BJ (cell line): ENCODE measurements at regions of chr20 and their contacts with region 1.

Region 1: GRCh38 chr20:51001758-51002157 is 21.1 kb downstream of the KCNG1 start:
- DNase-seq: no peak
- H3K4me3 ChIP-seq: no peak overlapping the region
- H3K27me3 ChIP-seq: no peaks in the 10 kb centered on the region; the same call in 1 of the 2 replicates
- CTCF ChIP-seq: no peak

Region 2: GRCh38 chr20:50987592-50988210 is 14.1 kb before region 1 on chr20:
- CTCF ChIA-PET with region 1: interaction called, 19 read pairs
- POLR2A ChIA-PET with region 1: no interaction called
- DNase-seq: peak; percentile 44
- H3K4me3 ChIP-seq: no peak overlapping the region
- H3K27me3 ChIP-seq: no peaks in the 10 kb centered on the region
- CTCF ChIP-seq: peak; percentile 80

Region 3: GRCh38 chr20:51014797-51015722 is 13.3 kb after region 1 on chr20:
- CTCF ChIA-PET with region 1: interaction called, 14 read pairs
- POLR2A ChIA-PET with region 1: no interaction called
- DNase-seq: no peak
- H3K4me3 ChIP-seq: no peak overlapping the region
- H3K27me3 ChIP-seq: no peaks in the 10 kb centered on the region
- CTCF ChIP-seq: peak; percentile 88